ENCODE measurements at regions of chr21 and their contacts with region 1.

Region 1: GRCh38 chr21:44845399-44846223 is 27.7 kb upstream of the SUMO3 start:
- DNase-seq: peak; percentile 69
- ATAC-seq: peak; percentile 81
- H3K4me3 Mint-ChIP-seq: peak overlapping the region; percentile 36
- H3K27ac Mint-ChIP-seq: no peak overlapping the region
- H3K4me1 Mint-ChIP-seq: peaks cover 8% of the 10 kb centered on the region
- H3K27me3 Mint-ChIP-seq: peaks cover 6% of the 10 kb centered on the region

Region 2: DNA sequence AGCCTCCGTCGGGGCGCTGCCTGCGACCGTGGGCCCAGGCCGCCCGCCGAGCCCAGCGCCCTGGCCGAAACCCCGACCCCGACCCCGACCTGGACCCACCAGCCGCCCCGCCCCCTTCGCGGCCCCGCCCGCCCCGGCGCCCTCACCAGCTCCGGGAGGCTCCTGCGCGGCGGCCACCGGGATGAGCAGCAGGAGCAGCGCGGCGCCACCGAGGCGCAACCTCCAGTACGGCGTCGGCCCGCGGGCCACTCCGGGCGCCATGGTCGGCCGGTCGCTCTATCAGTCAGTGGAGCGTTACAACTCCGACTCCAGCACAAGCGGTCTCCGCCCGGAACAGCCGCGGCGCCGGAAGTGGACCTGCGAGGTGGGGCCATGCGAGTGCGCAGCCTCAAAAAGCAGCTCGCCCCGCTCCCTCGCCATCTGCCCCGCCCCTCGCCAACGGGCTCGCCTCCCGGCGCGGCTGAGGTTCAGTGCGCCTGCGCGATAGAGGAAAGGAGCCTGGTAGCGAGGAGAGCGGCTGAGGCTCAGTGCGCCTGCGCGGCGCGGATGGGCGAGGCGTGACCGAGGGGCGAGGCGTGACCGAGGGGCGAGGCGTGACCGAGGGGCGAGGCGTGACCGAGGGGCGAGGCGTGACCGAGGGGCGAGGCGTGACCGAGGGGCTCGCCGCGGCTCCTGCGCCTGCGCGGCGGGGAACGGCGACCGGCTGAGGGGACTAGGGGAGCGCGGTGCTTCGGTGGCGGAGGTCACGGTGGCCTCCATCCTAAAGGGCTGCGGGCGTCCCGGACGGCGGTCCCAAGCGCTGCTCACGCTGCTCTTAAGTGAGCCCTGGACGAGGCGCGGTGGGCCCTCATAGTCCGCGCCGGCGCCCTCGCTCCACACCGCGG is 28.0 kb after region 1 on chr21 and contains the start of gene PTTG1IP:
- CTCF ChIA-PET with region 1: interaction called, 11 read pairs
- DNase-seq: peak; percentile 99
- ATAC-seq: peak; percentile 86
- H3K4me3 Mint-ChIP-seq: peak within 1 kb of the TSS; percentile 86
- H3K27ac Mint-ChIP-seq: peak within 1 kb of the TSS; percentile 90
- H3K4me1 Mint-ChIP-seq: peaks cover 41% of the 10 kb centered on the region
- H3K27me3 Mint-ChIP-seq: no peaks in the 10 kb centered on the region
- total RNA-seq, gene PTTG1IP: 46.0 to 49.9 TPM

Measured in activated CD8-positive, alpha-beta memory T cell treated with anti-CD3 and anti-CD28 coated beads, Interleukin-2, amount 10 ng/mL, durations not matched to agents 7 days and 5 days (primary cell).